ENCODE measurements at regions of chr10 and their contacts with region 1.

Region 1: DNA sequence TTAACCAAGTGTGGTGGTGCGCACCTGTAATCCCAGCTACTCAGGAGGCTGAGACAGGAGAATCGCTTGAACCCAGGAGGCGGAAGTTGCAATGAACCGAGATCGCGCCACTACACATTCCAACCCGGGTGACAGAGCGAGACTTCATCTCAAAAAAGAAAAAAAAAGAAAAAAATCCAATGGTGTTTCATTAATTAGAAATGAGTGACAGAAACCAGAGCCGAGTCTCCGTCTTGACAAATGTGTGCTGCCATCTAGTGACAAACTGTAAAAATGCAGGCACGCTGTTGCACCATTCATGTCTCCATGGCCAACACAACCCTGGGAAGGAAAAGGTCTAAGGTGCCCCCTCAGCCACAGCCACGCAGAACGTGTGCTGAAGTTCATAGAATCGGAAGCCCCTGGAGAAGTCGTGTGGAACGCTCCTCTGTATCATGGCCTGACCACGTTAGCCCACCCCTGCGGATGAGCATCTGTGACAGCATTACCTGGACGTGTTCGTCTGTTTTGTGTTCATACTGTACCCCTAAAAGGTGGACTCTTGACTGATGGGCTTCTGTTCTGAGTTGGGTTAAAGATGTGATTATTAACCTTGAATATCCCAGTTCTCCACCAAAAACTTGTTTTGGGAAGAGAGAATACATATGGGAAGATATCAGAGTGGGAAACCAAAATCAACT is 94.9 kb downstream of the LYZL2 start:
- DNase-seq: no peak

Region 2: DNA sequence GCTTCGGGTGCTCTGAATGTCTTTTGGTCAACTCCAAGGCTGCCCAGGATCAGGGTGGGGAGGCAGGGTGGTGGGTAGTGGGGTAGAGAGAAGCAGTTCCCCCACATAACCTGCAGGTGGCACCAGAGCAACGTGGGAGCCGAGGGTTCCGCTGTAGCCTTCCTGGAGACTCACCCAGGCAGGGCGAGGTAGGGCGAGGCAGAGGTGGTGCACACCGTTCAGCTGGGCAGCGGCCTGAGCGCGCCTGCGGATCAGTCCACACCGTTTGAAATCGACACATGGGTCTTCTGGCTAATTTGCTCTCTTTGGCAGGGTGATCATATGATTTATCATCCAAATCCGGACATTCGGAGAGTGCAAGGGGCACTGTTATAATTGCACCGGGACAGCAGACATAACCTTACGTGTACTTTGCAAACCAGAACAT is 142.0 kb before region 1 on chr10:
- intact Hi-C with region 1: loop called (anchors 2 kb)
- DNase-seq: peak; percentile 93

Region 3: DNA sequence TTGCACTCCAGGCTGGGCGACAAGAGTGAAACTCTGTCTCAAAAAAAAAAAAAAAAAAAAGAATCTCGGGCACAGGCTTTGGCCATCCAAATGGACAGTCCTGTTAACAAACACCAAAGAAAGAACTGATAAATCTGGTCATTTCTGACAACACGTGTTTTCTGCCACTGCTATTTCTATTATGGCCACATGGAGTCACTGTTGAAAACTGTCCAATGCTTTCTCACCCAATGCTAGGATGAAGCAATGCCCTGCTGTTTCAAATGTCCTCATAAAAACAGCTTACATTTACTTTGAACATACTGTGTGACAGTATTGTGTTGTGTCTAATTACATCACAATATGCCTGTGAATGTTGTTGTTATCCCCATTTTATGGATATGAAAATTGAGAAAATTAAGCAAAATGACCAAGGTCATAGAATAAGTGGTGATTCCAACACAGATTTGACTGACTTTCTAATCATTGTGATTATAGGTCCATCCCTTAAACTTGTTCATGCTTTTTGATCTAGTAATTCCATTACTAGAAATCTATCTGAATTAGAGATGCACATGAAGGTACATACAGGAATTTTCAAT is 120.5 kb before region 1 on chr10:
- intact Hi-C with region 1: loop called (anchors 2 kb)
- DNase-seq: no peak

Region 4: GRCh38 chr10:30447125-30447799 is 87.3 kb before region 1 on chr10:
- intact Hi-C with region 1: no loop called
- DNase-seq: no peak

Region 5: GRCh38 chr10:30467651-30468338 is 66.8 kb before region 1 on chr10:
- intact Hi-C with region 1: no loop called
- DNase-seq: no peak

Measured in cardiac septum (tissue), 1 donor.